ENCODE measurements at regions of chr10 and their contacts with region 1.

Region 1: GRCh38 chr10:112471878-112472487 is 25.0 kb downstream of the VTI1A start:
- DNase-seq: no peak
- ATAC-seq: peak; percentile 80
- H3K4me3 Mint-ChIP-seq: no peak overlapping the region
- H3K27ac Mint-ChIP-seq: peak overlapping the region; percentile 42
- H3K4me1 Mint-ChIP-seq: peaks cover 6% of the 10 kb centered on the region
- H3K27me3 Mint-ChIP-seq: no peaks in the 10 kb centered on the region

Region 2: DNA sequence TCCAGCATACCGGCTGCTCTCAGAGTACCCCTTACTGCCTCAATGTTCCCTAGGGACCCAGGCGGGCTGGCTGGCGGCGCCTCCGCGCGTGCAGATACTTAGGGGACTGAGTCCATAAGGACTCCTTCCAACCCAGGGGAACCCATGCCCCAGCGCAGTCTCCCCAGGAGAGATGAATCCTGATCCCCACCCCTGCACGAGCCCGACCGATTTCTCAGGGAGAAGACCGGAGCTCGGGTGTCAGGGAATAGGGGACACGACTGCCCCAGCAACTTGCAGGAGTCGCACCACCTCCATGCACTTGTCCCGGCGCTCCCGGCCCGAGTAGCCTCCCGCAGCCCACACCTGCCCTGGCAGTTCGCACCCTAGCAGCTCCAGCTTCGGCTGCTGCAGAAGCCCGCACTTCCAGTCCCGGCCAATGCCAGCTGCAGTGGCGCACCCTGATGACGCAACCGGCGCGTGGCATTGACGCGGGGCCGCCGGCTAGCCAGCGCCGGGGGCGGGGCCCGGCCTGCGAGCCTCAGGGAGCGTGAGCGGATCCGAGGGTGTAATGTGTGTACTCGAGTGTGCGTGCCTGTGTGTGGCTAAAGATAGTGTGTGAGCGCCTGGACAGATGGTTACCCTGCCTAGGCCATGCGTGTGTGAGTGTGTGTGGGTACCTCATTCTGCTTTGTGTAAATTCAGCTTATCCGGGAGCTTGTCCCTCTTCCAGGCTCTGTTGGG is 288.5 kb before region 1 on chr10 and contains the start of gene GPAM:
- CTCF ChIA-PET with region 1: interaction called, 4 read pairs
- POLR2A ChIA-PET with region 1: no interaction called
- intact Hi-C with region 1: loop called (anchors 5 kb)
- DNase-seq: peak; percentile 98
- ATAC-seq: peak; percentile 97
- H3K4me3 Mint-ChIP-seq: peak within 1 kb of the TSS; percentile 88
- H3K27ac Mint-ChIP-seq: peak within 1 kb of the TSS; percentile 88
- H3K4me1 Mint-ChIP-seq: peaks cover 27% of the 10 kb centered on the region
- H3K27me3 Mint-ChIP-seq: peaks cover 2% of the 10 kb centered on the region
- total RNA-seq, gene GPAM: 5.7 to 7.5 TPM

Region 3: DNA sequence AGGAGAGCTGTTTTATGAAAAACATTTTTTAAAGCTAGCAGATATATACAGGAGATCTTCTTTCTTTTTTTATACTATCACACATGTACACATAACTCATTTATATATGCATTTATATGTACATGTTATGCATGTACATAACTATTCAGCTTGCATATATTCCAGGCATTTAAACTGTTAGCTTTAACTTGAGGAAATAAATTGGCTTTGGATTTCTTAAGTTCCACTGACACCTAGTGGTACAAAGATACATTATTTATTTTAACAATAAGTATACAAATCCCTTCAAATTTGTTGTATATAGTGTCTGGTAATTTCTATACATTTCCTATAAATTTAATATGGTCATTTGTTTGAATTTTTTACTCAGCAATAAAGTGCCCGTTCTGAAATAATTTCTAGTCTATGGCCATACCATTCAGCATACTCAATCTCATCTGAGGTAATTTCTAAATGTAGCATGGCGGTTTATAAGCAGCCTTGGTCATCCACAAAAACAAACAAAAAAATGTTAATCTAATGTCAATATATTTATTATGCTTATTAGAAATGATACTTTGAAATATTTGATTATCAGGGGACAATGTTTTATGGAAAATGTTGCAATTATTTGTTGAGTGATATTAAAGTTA is 36.9 kb before region 1 on chr10:
- CTCF ChIA-PET with region 1: interaction called, 29 read pairs
- POLR2A ChIA-PET with region 1: no interaction called
- intact Hi-C with region 1: loop called (anchors 5 kb)
- DNase-seq: no peak
- ATAC-seq: no peak
- H3K4me3 Mint-ChIP-seq: no peak overlapping the region
- H3K27ac Mint-ChIP-seq: no peak overlapping the region
- H3K4me1 Mint-ChIP-seq: no peaks in the 10 kb centered on the region
- H3K27me3 Mint-ChIP-seq: no peaks in the 10 kb centered on the region

Region 4: GRCh38 chr10:112461029-112461887 is 10.7 kb before region 1 on chr10:
- CTCF ChIA-PET with region 1: interaction called, 23 read pairs
- POLR2A ChIA-PET with region 1: interaction called, 5 read pairs
- intact Hi-C with region 1: no loop called
- DNase-seq: peak; percentile 80
- ATAC-seq: peak; percentile 89
- H3K4me3 Mint-ChIP-seq: no peak overlapping the region
- H3K27ac Mint-ChIP-seq: peak overlapping the region; percentile 95
- H3K4me1 Mint-ChIP-seq: peaks cover 33% of the 10 kb centered on the region
- H3K27me3 Mint-ChIP-seq: no peaks in the 10 kb centered on the region

Region 5: GRCh38 chr10:112580267-112580666 is 108.3 kb after region 1 on chr10:
- CTCF ChIA-PET with region 1: no interaction called
- POLR2A ChIA-PET with region 1: no interaction called
- intact Hi-C with region 1: no loop called
- DNase-seq: no peak
- ATAC-seq: no peak
- H3K4me3 Mint-ChIP-seq: no peak overlapping the region
- H3K27ac Mint-ChIP-seq: no peak overlapping the region
- H3K4me1 Mint-ChIP-seq: no peaks in the 10 kb centered on the region
- H3K27me3 Mint-ChIP-seq: no peaks in the 10 kb centered on the region

Region 6: DNA sequence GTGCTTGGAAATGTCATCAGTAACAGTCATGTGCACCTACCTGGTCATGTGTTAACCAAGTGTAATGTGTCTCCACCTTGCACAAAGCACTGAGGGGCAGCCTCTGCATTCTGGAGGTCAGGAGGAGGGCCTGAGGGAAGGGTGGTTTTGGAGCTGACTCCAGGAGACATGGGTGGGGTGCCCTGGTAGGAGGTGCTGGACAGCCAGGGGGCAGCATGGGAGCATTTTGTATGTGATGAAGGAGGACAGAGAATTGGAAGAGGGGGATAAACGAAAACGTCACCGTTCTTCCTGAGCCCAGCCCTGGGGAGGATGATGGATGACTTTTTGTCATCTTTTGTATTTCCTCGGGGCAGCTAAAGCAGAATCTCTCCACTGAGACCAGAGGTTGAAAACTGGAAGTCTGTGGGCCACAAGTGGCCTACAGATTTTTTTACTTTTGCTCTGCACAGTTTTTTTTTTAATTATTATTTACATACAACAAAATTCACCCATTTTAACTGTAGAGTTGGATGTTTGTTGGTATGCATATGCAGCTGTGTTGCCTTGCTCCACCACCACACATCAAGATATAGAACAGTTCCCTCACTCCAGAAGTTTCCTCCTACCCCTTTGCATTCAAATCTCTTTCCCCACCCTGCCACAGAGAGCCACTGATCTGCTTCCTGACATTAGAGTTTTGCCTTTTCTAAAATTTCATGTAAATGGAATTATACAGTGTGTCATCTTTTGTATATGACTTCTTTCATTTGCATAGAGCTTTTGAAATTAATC is 217.5 kb after region 1 on chr10:
- CTCF ChIA-PET with region 1: no interaction called
- POLR2A ChIA-PET with region 1: no interaction called
- intact Hi-C with region 1: no loop called
- DNase-seq: peak; percentile 5
- ATAC-seq: no peak
- H3K4me3 Mint-ChIP-seq: no peak overlapping the region
- H3K27ac Mint-ChIP-seq: no peak overlapping the region
- H3K4me1 Mint-ChIP-seq: no peaks in the 10 kb centered on the region
- H3K27me3 Mint-ChIP-seq: no peaks in the 10 kb centered on the region

Region 7: DNA sequence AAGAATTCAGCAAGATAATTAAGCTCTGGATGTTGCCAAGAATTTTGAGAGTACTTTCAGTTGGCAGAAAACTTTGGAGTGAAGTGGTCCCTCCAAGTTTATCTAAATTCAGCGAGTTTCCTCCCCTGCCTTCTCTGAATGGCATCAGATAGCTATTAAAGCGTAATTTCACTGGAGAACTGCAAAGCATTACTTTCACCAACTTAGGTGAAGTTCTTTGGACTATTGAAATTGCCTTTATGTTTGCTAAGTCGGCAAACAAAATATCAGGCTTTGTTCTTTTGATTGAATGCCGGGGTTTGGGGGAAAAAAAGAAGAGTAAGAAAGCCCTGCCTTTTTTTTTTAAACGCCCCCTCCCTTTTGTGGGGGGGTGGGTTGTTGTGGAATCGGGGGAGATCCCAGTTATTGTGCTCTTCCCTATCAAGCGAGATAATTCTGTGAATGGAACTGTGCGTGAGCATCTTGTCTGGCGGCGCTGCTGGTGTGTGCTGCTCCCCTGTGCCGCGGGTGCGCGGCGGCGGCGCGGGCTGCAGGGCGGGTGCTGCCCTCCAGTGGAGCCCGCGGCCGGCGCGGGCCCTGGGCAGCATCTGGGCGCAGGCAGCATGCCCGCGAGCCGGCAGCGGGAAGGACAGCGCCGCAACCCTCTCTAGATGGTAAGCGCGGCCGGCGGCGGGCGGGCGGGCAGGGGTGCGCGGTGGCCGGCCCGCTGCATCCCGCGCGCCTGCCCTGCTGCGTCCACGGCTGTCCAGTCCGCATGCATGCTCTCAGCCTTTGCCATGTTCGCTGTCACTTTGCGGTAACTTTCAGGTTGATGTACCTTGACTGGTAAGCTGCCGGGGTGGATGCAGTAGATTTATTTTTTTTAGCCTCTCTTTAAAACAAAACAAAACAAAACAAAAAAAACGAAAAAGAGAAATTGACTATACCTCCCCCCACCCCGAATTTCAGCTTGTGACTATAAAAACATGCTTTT is 654.5 kb after region 1 on chr10:
- CTCF ChIA-PET with region 1: no interaction called
- POLR2A ChIA-PET with region 1: no interaction called
- intact Hi-C with region 1: loop called in 1 of 2 experiments (anchors 1 kb)
- DNase-seq: peak; percentile 76
- ATAC-seq: peak; percentile 90
- H3K4me3 Mint-ChIP-seq: peak overlapping the region; percentile 28
- H3K27ac Mint-ChIP-seq: no peak overlapping the region
- H3K4me1 Mint-ChIP-seq: peaks cover 6% of the 10 kb centered on the region
- H3K27me3 Mint-ChIP-seq: peaks cover 44% of the 10 kb centered on the region

Measured in activated CD4-positive, alpha-beta T cell treated with anti-CD3 and anti-CD28 coated beads for 36 hours (primary cell).